PC-9 (cell line): ENCODE measurements at regions of chr1 and their contacts with region 1.

Region 1: DNA sequence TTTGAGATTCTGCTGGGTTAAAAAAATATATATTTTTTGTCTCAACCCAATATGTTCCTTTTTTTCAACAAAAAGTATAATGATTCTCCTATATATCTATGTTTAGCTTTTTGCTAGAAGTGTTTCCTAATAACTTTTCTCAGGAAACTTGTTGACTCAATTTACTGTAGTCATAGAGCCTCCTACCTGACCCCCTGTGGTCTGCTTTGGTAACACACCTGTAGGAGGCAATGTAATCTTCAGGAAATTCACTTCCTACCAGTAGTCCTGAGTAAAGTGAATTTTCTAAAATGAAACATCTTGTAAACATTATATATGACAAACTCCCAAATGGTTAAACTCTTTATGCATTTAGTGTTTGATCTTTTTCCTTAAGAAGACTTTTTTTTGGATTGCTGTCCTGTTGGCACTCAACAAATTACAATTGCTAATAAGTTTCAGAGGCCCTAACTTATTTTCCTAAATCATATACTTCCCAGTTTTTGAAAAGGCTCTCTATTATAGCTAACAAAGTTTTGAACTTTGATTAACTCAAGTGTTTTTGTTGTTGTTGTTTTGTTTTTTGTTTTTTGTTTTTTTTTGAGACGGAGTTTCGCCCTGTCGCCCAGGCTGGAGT is 118.3 kb downstream of the OLFML2B start:
- DNase-seq: no peak
- H3K4me3 ChIP-seq: no peak overlapping the region
- H3K27ac ChIP-seq: no peak overlapping the region
- H3K4me1 ChIP-seq: no peaks in the 10 kb centered on the region
- H3K27me3 ChIP-seq: no peaks in the 10 kb centered on the region
- CTCF ChIP-seq: peak; percentile 67

Region 2: DNA sequence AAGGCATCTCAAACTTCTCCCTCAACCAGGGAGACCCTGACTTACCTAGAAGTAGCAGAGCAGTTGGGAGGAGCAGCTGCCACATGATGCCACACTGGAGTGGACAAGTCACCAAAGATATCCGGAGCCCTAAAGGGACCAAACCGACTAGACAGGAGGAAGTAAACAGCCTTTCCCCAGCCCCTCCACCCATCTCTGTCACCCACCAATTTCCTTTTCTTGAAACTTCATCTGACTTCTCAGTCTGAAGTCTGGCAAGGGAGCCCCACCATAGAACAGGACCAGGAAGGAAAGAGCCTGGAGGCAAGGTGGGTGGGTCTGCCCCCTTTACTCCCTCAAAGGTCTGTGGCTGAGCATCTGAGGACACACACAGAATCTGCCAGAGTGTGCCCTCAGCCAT is 355.7 kb before region 1 on chr1 and contains the start of gene FCGR3A:
- CTCF ChIA-PET with region 1: no interaction called
- POLR2A ChIA-PET with region 1: no interaction called
- intact Hi-C with region 1: no loop called
- DNase-seq: no peak
- H3K4me3 ChIP-seq: no peak within 1 kb of the TSS
- H3K27ac ChIP-seq: no peak within 1 kb of the TSS
- H3K4me1 ChIP-seq: no peaks in the 10 kb centered on the region
- H3K27me3 ChIP-seq: no peaks in the 10 kb centered on the region
- CTCF ChIP-seq: no peak
- total RNA-seq, gene FCGR3A: not detected in 2 replicates

Region 3: DNA sequence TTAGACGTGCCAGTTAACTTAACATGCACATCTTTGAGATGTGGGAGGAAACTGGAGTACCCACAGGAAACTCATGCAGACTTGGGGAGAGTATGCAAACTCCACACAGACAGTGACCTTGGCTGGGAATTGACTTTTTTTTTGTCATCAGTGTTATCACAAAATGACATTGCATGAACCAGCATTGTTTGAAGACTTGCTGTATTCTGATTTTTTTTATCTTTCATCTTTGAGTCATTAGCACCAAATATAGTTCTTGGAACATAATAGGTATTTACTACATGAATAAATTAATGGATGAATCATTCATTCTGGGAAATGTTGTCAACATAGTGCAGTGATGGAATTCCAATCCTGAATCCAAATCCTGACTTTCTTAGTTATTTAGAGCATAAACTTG is 62.2 kb before region 1 on chr1:
- CTCF ChIA-PET with region 1: no interaction called
- POLR2A ChIA-PET with region 1: no interaction called
- intact Hi-C with region 1: no loop called
- DNase-seq: no peak
- H3K4me3 ChIP-seq: no peak overlapping the region
- H3K27ac ChIP-seq: no peak overlapping the region
- H3K4me1 ChIP-seq: no peaks in the 10 kb centered on the region
- H3K27me3 ChIP-seq: no peaks in the 10 kb centered on the region
- CTCF ChIP-seq: no peak

Region 4: GRCh38 chr1:161962091-161962887 is 56.9 kb after region 1 on chr1:
- CTCF ChIA-PET with region 1: interaction called, 12 read pairs
- POLR2A ChIA-PET with region 1: no interaction called
- intact Hi-C with region 1: no loop called
- DNase-seq: no peak
- H3K4me3 ChIP-seq: no peak overlapping the region
- H3K27ac ChIP-seq: peak overlapping the region; percentile 34; the same call in 1 of the 2 replicates
- H3K4me1 ChIP-seq: peaks cover 14% of the 10 kb centered on the region; the same call in 1 of the 2 replicates
- H3K27me3 ChIP-seq: no peaks in the 10 kb centered on the region
- CTCF ChIP-seq: no peak

Region 5: DNA sequence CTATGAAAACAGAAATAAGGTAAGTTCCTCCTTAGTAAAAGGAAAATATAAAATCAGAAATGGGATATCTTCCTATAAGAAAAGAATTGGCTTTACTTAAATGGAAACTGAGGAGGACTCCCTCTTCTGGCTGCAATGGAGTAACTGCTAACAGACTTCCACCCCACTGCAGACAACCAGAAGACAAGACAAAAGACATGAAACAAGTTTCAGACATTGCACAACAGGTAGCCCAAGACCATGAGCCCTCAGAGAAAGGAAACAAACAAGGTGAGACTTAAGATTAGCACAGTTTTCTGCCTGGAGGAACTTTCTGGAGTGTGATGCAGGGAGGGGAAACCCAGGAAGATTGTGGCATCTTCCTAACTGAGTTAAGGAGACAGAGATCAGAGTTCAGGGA is 135.3 kb after region 1 on chr1:
- CTCF ChIA-PET with region 1: interaction called, 10 read pairs
- POLR2A ChIA-PET with region 1: no interaction called
- intact Hi-C with region 1: no loop called
- DNase-seq: peak in 1 of 2 experiments; percentile 39
- H3K4me3 ChIP-seq: no peak overlapping the region
- H3K27ac ChIP-seq: no peak overlapping the region
- H3K4me1 ChIP-seq: 0 out of 2 replicates have a peak, but pooled peaks cover 1% of the 10 kb centered on the region
- H3K27me3 ChIP-seq: no peaks in the 10 kb centered on the region
- CTCF ChIP-seq: peak; percentile 58; the same call in 1 of the 2 replicates